ENCODE measurements at regions of chr6 and their contacts with region 1.

Region 1: DNA sequence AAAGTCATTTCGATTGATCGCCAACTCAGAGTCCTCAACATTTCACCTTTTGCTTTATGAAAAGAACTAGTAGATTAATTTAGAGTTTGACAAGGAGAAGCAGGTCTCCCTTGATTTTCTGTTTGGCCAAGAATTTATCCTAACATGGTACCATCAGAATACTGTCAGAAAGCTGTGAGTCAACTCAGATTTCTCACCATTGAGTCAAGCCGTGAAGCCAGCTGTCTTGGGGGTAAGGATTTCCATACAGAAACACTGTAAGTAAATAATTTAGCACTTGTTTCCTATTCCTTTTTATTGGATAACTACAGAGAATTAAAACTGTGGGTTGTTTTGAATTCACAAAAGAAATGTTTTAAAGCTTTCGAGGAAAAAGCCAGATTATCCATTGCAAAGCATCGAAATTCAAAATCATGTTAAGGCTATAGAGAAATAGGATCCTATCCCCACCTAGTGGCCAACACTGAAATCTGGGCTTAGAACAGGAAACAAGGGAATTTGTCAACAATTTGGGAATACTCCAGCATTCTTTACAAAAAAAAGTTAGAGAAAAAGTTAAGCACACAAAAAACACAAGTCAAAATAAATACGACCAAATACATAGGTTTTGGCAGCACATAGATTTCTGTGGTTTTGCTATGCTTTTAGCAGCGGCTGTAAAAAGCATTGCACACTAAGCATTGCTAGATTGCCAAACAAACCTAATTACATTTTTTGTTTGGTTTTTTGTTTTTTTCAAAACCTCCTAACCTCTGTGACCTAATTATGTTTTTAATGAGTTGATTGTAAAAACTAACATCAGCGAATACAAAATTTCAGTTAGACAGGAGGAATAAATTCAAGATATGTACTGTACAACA is 44.2 kb downstream of the COL11A2 start:
- DNase-seq: no peak
- ATAC-seq: no peak
- H3K4me3 Mint-ChIP-seq: no peak overlapping the region
- H3K27ac Mint-ChIP-seq: no peak overlapping the region; the same call in 1 of the 2 replicates
- H3K4me1 Mint-ChIP-seq: peaks cover 23% of the 10 kb centered on the region
- H3K27me3 Mint-ChIP-seq: peaks cover 9% of the 10 kb centered on the region
- CTCF ChIP-seq: peak; percentile 59; the same call in 1 of the 2 replicates

Region 2: GRCh38 chr6:33000055-33000454 is 148.0 kb before region 1 on chr6:
- CTCF ChIA-PET with region 1: interaction called, 12 read pairs
- POLR2A ChIA-PET with region 1: interaction called, 3 read pairs
- DNase-seq: peak; percentile 67
- ATAC-seq: peak; percentile 98
- H3K4me3 Mint-ChIP-seq: no peak overlapping the region
- H3K27ac Mint-ChIP-seq: no peak overlapping the region
- H3K4me1 Mint-ChIP-seq: peaks cover 4% of the 10 kb centered on the region
- H3K27me3 Mint-ChIP-seq: peaks cover 2% of the 10 kb centered on the region; the same call in 1 of the 2 replicates
- CTCF ChIP-seq: peak; percentile 21; the same call in 1 of the 2 replicates

Region 3: DNA sequence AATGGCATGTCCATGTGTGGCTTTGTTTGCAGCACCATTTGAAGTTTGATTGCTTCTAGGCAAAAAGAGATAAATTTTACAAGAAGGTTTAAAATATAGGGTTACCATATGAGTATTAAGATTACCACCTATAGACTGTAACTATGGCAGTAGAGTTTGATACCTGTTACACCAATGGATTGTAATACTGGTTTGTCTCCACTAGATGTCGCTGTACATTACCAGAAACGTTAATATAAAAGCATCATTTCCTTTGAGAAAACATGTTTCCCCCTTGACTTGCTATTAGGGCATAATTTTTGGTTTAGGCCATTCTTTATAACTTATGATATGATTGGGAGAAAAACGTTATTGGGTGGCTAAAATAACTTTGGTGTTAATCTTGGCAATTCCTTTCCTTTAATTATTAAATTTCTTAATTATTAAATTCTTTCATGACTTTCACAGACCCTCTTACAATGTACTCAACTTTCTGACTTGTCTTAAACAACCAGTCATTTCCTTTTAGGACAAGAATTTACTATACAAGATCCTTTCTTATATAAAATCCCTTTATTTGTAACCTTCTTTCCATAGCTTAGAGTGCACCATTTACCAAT is 29.4 kb before region 1 on chr6:
- CTCF ChIA-PET with region 1: interaction called, 76 read pairs
- POLR2A ChIA-PET with region 1: interaction called, 4 read pairs
- DNase-seq: no peak
- ATAC-seq: no peak
- H3K4me3 Mint-ChIP-seq: peak overlapping the region; percentile 98
- H3K27ac Mint-ChIP-seq: peak overlapping the region; percentile 100
- H3K4me1 Mint-ChIP-seq: peaks cover 76% of the 10 kb centered on the region
- H3K27me3 Mint-ChIP-seq: peaks cover 2% of the 10 kb centered on the region; the same call in 1 of the 2 replicates
- CTCF ChIP-seq: peak; percentile 89